GM12878 (cell line): ENCODE measurements at regions of chr11 and their contacts with region 1.

Region 1: DNA sequence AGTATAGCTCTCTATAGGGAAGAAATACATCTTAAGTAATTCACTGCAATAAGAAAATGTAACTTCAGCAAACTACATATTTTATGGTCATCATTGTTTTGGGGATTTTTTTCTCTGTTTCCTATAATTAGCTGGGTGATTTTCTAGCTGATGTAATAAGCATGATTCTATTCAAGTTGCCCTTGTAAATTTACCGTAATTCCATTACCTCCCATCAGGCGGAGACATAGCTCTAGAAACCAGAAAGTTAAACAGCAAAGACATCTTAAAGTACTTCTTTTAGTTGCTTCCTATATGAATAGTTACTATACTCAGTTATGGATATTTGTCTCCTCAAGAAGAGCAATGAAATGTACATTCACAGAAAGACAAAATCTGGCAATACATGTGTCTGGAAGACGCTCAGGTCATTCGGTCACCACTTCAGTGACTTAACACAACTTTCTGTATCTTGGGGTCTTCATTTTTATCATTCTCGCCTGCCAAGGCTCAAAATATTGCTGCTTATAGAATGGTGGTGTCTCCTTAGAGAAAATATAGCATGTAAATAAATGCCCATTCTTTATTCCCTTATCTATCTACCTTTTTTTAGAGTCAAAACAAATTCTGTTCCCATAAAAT is 239.9 kb upstream of the ZC3H12C start:
- DNase-seq: peak; percentile 56
- ATAC-seq: peak; percentile 89
- H3K4me3 ChIP-seq: no peak overlapping the region
- H3K27ac ChIP-seq: no peak overlapping the region
- H3K4me1 ChIP-seq: no peaks in the 10 kb centered on the region
- H3K27me3 ChIP-seq: no peaks in the 10 kb centered on the region
- CTCF ChIP-seq: peak; percentile 69 to 95 (median 81)
- EP300 ChIP-seq: no peak
- POLR2A ChIP-seq: no peak
- RAD21 ChIP-seq: peak; percentile 99

Region 2: GRCh38 chr11:109864834-109865547 is 11.7 kb after region 1 on chr11:
- CTCF ChIA-PET with region 1: interaction called, 49 read pairs
- POLR2A ChIA-PET with region 1: interaction called, 3 read pairs
- RAD21 ChIA-PET with region 1: interaction called, 35 read pairs
- SMC1A ChIA-PET with region 1: interaction called, 47 read pairs
- in situ Hi-C with region 1: no loop called
- intact Hi-C with region 1: no loop called
- DNase-seq: no peak
- ATAC-seq: peak; percentile 54
- H3K4me3 ChIP-seq: no peak overlapping the region
- H3K27ac ChIP-seq: no peak overlapping the region; the same call in 1 of the 2 replicates
- H3K4me1 ChIP-seq: peaks cover 19% of the 10 kb centered on the region
- H3K27me3 ChIP-seq: no peaks in the 10 kb centered on the region
- CTCF ChIP-seq: no peak
- EP300 ChIP-seq: no peak
- POLR2A ChIP-seq: no peak
- RAD21 ChIP-seq: no peak

Region 3: DNA sequence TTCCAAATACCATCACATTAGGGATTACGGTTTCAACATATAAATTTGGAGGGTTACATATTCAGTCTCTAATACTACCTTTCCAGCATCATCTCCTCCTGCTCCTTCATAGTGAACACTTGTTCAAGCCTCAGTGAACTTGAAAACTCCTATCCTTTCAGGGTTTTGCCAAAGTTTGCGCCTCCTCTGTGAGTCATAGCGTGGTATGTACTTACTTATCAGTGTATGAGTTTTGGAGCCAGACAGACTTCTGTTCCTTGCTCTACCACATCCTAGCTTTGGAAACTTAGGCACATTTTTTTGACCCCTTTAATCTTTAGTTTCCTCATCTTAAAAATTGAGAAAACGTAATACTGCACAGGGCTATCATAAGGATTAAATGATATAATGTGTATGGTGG is 79.9 kb after region 1 on chr11:
- CTCF ChIA-PET with region 1: interaction called, 16 read pairs
- POLR2A ChIA-PET with region 1: no interaction called
- RAD21 ChIA-PET with region 1: interaction called, 21 read pairs
- SMC1A ChIA-PET with region 1: interaction called, 21 read pairs
- in situ Hi-C with region 1: no loop called
- intact Hi-C with region 1: no loop called
- DNase-seq: no peak
- ATAC-seq: no peak
- H3K4me3 ChIP-seq: no peak overlapping the region
- H3K27ac ChIP-seq: no peak overlapping the region
- H3K4me1 ChIP-seq: no peaks in the 10 kb centered on the region
- H3K27me3 ChIP-seq: no peaks in the 10 kb centered on the region; a peak in 2 of 4 replicates
- CTCF ChIP-seq: no peak
- EP300 ChIP-seq: no peak
- POLR2A ChIP-seq: no peak
- RAD21 ChIP-seq: no peak

Region 4: DNA sequence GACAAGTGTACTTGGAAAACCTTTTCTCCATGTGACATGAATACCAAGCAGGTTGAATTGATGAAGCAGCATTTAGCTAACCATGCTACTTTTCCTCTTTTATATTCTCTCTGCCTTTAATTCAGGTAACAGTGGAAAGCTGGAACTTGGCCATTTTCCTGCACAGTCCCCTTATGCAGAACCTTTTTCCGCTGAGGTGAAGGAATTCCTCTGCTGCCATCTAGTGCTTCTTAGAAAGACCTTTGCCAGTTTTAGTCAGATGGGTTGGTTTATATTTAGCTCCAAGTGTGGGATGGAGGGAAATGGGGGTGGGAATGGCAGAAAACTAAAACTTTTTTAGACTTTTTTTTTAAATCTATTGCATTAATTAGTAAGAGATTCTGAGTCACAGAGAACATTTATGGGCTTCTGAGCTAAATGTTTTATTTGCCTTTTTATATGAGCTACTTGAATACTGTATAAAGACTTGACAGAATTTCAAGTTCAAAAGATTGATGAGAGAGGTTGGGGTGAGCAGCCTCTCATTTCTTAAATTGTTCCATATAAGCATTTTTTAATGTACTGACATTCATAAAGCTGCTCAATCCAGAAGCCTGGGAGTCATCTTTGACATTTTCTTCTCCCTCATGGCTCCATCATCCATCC is 86.0 kb after region 1 on chr11:
- CTCF ChIA-PET with region 1: interaction called, 251 read pairs
- POLR2A ChIA-PET with region 1: interaction called, 7 read pairs
- RAD21 ChIA-PET with region 1: interaction called, 186 read pairs
- SMC1A ChIA-PET with region 1: interaction called, 165 read pairs
- in situ Hi-C with region 1: no loop called
- intact Hi-C with region 1: loop called (anchors 1 kb)
- DNase-seq: no peak
- ATAC-seq: peak; percentile 82
- H3K4me3 ChIP-seq: no peak overlapping the region
- H3K27ac ChIP-seq: no peak overlapping the region
- H3K4me1 ChIP-seq: no peaks in the 10 kb centered on the region
- H3K27me3 ChIP-seq: no peaks in the 10 kb centered on the region; a peak in 1 of 4 replicates
- CTCF ChIP-seq: peak; percentile 49 to 85 (median 60)
- EP300 ChIP-seq: no peak
- POLR2A ChIP-seq: no peak
- RAD21 ChIP-seq: peak; percentile 97

Region 5: GRCh38 chr11:110092515-110093404 is 239.5 kb after region 1 on chr11 and contains the start of gene ZC3H12C:
- CTCF ChIA-PET with region 1: no interaction called
- POLR2A ChIA-PET with region 1: no interaction called
- RAD21 ChIA-PET with region 1: interaction called, 4 read pairs
- SMC1A ChIA-PET with region 1: no interaction called
- in situ Hi-C with region 1: no loop called
- intact Hi-C with region 1: loop called (anchors 10 kb)
- DNase-seq: no peak
- ATAC-seq: peak; percentile 60
- H3K4me3 ChIP-seq: peak within 1 kb of the TSS; percentile 72
- H3K27ac ChIP-seq: peak within 1 kb of the TSS; percentile 75
- H3K4me1 ChIP-seq: peaks cover 21% of the 10 kb centered on the region
- H3K27me3 ChIP-seq: no peaks in the 10 kb centered on the region
- CTCF ChIP-seq: peak; percentile 19 to 44 (median 40); a peak in 5 of 6 replicates
- EP300 ChIP-seq: peak; percentile 58 to 63; a peak in 2 of 4 replicates
- POLR2A ChIP-seq: peak; percentile 80
- RAD21 ChIP-seq: peak; percentile 49
- polyA plus RNA-seq, gene ZC3H12C: 0.31 to 0.68 TPM

Region 6: GRCh38 chr11:110190885-110191284 is 337.6 kb after region 1 on chr11:
- CTCF ChIA-PET with region 1: interaction called, 3 read pairs
- POLR2A ChIA-PET with region 1: no interaction called
- RAD21 ChIA-PET with region 1: interaction called, 5 read pairs
- SMC1A ChIA-PET with region 1: no interaction called
- in situ Hi-C with region 1: no loop called
- intact Hi-C with region 1: loop called (anchors 5 kb)
- DNase-seq: no peak
- ATAC-seq: no peak
- H3K4me3 ChIP-seq: no peak overlapping the region
- H3K27ac ChIP-seq: no peak overlapping the region
- H3K4me1 ChIP-seq: peaks cover 6% of the 10 kb centered on the region; the same call in 1 of the 2 replicates
- H3K27me3 ChIP-seq: no peaks in the 10 kb centered on the region; a peak in 1 of 4 replicates
- CTCF ChIP-seq: no peak
- EP300 ChIP-seq: no peak
- POLR2A ChIP-seq: no peak
- RAD21 ChIP-seq: no peak

Region 7: DNA sequence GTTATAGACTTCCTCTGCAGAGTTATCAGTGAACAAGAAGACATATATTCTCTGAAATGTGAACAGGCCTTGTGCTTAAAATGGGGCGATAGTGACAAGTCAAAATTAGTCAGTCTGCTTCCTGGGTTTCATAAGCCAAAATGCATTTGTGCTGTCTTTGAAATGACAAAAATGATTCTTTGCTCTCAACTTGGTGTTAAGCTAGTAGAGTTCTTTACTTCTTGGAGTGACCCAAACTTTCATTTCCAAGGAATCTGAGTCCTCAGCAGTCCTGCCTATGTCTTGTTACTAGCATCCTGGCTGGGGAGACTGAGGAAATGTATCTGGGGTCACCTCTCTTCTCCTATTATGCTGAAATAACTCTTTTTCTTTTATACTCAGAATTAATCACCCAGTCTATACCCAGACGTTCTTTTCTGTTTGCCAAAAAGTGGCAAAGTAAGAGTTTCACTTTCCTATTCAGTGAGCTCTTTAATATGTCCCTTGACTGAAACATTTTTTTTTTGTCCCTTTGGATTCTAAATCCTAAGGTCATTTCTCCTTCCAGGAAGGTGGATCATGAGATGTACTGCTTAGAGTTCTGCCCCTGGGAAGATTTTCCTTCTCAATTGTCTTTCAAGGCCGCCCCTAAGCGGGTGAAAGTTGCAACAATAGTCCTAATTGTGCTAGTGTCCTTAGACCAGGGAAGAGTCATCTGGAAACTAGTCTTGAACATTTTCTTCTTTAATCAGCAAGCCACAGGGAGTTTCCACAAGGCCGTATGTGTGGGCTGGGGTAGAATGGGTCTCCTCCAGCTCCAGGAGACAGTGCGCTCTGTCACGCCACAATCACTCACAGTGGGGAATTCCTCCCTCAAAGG is 496.1 kb after region 1 on chr11:
- CTCF ChIA-PET with region 1: no interaction called
- POLR2A ChIA-PET with region 1: interaction called, 14 read pairs
- RAD21 ChIA-PET with region 1: no interaction called
- SMC1A ChIA-PET with region 1: no interaction called
- in situ Hi-C with region 1: no loop called
- intact Hi-C with region 1: no loop called
- DNase-seq: peak; percentile 94
- ATAC-seq: peak; percentile 86
- H3K4me3 ChIP-seq: peak overlapping the region; percentile 38; the same call in 1 of the 2 replicates
- H3K27ac ChIP-seq: peak overlapping the region; percentile 96
- H3K4me1 ChIP-seq: peaks cover 43% of the 10 kb centered on the region
- H3K27me3 ChIP-seq: no peaks in the 10 kb centered on the region
- CTCF ChIP-seq: peak in 1 of 3 experiments; percentile 33; a peak in 2 of 6 replicates
- EP300 ChIP-seq: peak; percentile 94 to 99
- POLR2A ChIP-seq: peak; percentile 30; the same call in 1 of the 2 replicates
- RAD21 ChIP-seq: peak; percentile 51